ENCODE measurements at regions of chr15 and their contacts with region 1.

Region 1: DNA sequence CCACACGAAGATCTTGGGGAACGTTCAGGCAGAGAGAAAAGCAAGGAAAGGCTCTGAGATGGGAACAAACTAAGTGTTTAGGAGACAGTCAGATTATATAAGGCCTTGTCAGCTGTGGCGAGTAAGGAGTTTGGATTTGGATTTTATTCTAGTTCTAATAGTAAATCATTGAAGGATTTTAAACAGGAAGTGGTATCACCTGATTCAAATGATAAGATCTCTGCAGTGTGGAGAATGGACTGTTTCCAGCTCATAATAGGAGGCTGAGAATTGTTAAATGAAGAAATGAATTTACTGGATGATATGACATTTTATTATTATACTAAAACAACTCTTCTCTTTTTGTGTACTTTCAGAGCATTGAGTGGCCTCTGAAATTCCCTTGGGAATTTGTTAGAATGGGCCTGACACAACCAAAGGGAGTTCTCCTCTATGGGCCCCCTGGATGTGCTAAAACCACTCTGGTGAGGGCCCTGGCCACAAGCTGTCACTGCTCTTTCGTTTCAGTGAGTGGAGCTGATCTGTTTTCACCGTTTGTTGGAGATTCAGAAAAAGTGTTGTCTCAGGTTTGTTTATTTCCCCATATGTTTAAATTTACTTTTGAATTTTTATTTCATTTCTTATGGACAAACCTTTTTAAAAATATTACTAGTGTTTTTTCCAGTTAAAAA is 36.0 kb upstream of the GATM start:
- DNase-seq: no peak
- ATAC-seq: no peak
- H3K4me3 ChIP-seq: no peak overlapping the region
- H3K27ac ChIP-seq: no peak overlapping the region
- H3K4me1 ChIP-seq: no peaks in the 10 kb centered on the region
- H3K27me3 ChIP-seq: no peaks in the 10 kb centered on the region
- CTCF ChIP-seq: no peak

Region 2: GRCh38 chr15:45549541-45550220 is 135.3 kb after region 1 on chr15:
- CTCF ChIA-PET with region 1: no interaction called
- POLR2A ChIA-PET with region 1: interaction called, 19 read pairs
- in situ Hi-C with region 1: no loop called
- intact Hi-C with region 1: no loop called
- DNase-seq: no peak
- ATAC-seq: no peak
- H3K4me3 ChIP-seq: no peak overlapping the region
- H3K27ac ChIP-seq: no peak overlapping the region
- H3K4me1 ChIP-seq: no peaks in the 10 kb centered on the region
- H3K27me3 ChIP-seq: 0 out of 2 replicates have a peak, but pooled peaks cover 2% of the 10 kb centered on the region
- CTCF ChIP-seq: no peak